ENCODE measurements at regions of chr6 and their contacts with region 1.

Region 1: DNA sequence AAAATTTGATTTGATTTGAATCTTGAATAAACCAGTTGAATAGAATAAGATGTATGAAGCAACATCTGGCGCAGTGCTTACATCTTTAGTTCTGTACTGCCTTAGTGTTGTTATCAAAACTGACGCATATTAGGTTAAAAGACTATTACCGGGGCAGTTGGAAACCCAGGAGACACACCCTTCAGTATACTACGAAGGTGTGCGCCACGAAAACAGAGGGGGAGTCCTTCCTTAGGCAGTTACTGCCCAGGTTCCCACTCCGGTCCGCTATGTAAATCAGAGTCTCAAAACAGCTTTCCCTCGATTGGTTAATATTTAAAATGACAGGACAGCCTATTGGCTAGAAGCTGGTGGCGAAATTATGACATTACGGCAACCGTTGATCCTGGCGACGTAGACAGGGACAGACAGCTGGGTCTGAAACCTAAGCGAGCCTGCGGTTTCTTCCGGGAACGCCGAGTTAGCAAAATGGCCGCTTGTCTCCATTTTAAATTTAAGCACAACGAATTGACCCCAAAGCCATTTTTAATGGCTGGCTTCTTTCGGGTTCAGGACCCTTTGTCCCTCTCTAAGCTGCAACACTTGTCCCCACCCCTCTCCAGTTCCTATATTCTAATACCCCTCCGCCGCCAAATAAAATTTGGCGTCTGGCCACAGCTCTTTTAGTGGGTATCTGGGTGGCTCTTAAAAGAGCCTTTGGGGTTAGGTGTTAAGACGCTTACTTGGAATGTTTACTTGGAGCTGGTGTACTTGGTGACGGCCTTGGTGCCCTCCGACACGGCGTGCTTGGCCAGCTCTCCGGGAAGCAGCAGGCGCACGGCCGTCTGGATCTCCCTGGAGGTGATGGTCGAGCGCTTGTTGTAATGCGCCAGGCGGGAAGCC is 35.8 kb downstream of the HFE start:
- DNase-seq: peak; percentile 95
- H3K4me3 Mint-ChIP-seq: peak overlapping the region; percentile 95
- H3K27ac Mint-ChIP-seq: peak overlapping the region; percentile 100
- H3K4me1 Mint-ChIP-seq: peaks cover 34% of the 10 kb centered on the region
- H3K27me3 Mint-ChIP-seq: peaks cover 8% of the 10 kb centered on the region

Region 2: DNA sequence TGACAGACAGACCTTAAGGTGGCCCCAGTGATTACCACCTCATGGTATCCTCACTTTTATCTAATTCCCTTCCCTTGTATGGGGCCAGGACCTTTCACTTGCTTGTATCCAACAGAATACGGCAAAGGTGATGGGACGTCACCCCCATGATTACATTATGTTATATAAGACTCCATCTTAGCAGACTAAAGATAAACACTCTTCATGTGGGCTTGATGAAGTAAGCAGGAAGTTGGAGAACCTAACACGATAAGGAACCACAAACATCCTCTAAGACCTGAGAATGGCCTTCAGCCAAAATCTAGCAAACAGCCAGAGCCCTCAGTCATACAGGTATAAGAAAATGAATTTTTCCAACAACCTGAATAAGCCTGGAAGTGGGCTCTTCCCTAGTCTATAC is 257.0 kb before region 1 on chr6:
- CTCF ChIA-PET with region 1: no interaction called
- POLR2A ChIA-PET with region 1: no interaction called
- intact Hi-C with region 1: no loop called
- DNase-seq: peak; percentile 19
- H3K4me3 Mint-ChIP-seq: no peak overlapping the region
- H3K27ac Mint-ChIP-seq: peak overlapping the region; percentile 32
- H3K4me1 Mint-ChIP-seq: peaks cover 26% of the 10 kb centered on the region
- H3K27me3 Mint-ChIP-seq: no peaks in the 10 kb centered on the region

Region 3: GRCh38 chr6:26054857-26055669 is 68.0 kb before region 1 on chr6:
- CTCF ChIA-PET with region 1: interaction called, 4 read pairs
- POLR2A ChIA-PET with region 1: interaction called, 121 read pairs
- intact Hi-C with region 1: loop called (anchors 1 kb)
- DNase-seq: peak; percentile 94
- H3K4me3 Mint-ChIP-seq: peak overlapping the region; percentile 93
- H3K27ac Mint-ChIP-seq: peak overlapping the region; percentile 98
- H3K4me1 Mint-ChIP-seq: peaks cover 22% of the 10 kb centered on the region
- H3K27me3 Mint-ChIP-seq: peaks cover 14% of the 10 kb centered on the region

Region 4: GRCh38 chr6:26156076-26156849 is 33.2 kb after region 1 on chr6:
- CTCF ChIA-PET with region 1: interaction called, 11 read pairs
- POLR2A ChIA-PET with region 1: interaction called, 863 read pairs
- intact Hi-C with region 1: loop called (anchors 1 kb)
- DNase-seq: peak; percentile 91
- H3K4me3 Mint-ChIP-seq: peak overlapping the region; percentile 81
- H3K27ac Mint-ChIP-seq: peak overlapping the region; percentile 93
- H3K4me1 Mint-ChIP-seq: peaks cover 46% of the 10 kb centered on the region
- H3K27me3 Mint-ChIP-seq: peaks cover 24% of the 10 kb centered on the region

Region 5: GRCh38 chr6:26204332-26205165 is 81.5 kb after region 1 on chr6:
- CTCF ChIA-PET with region 1: interaction called, 4 read pairs
- POLR2A ChIA-PET with region 1: interaction called, 163 read pairs
- intact Hi-C with region 1: loop called (anchors 1 kb)
- DNase-seq: peak; percentile 90
- H3K4me3 Mint-ChIP-seq: no peak overlapping the region
- H3K27ac Mint-ChIP-seq: no peak overlapping the region
- H3K4me1 Mint-ChIP-seq: peaks cover 21% of the 10 kb centered on the region
- H3K27me3 Mint-ChIP-seq: peaks cover 3% of the 10 kb centered on the region

Region 6: DNA sequence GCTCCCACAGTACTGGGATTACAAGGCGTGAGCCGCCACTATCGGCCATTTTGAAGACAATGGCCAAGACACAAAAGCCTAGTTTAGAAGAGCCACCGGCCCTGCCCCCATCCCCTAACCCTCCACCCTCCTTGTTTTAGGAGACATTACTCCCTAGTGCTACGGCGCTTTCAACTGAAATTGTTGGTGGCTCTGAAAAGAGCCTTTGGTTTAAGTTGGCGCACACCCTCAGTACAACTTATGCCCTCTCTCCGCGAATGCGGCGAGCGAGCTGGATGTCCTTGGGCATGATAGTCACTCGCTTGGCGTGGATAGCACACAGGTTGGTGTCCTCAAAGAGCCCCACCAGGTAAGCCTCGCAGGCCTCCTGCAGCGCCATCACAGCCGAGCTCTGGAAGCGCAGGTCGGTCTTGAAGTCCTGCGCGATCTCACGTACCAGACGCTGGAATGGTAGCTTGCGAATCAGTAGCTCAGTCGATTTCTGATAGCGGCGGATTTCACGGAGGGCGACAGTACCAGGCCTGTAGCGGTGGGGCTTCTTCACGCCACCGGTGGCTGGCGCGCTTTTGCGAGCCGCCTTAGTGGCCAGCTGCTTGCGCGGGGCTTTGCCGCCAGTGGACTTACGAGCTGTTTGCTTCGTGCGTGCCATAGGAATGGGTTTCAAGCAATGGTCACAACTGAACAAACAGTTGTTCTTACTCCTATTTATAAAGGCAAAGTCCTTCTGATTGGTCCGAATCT is 127.1 kb after region 1 on chr6:
- CTCF ChIA-PET with region 1: no interaction called
- POLR2A ChIA-PET with region 1: interaction called, 14 read pairs
- intact Hi-C with region 1: no loop called
- DNase-seq: peak; percentile 84
- H3K4me3 Mint-ChIP-seq: peak overlapping the region; percentile 82
- H3K27ac Mint-ChIP-seq: peak overlapping the region; percentile 99
- H3K4me1 Mint-ChIP-seq: peaks cover 22% of the 10 kb centered on the region
- H3K27me3 Mint-ChIP-seq: no peaks in the 10 kb centered on the region

Region 7: DNA sequence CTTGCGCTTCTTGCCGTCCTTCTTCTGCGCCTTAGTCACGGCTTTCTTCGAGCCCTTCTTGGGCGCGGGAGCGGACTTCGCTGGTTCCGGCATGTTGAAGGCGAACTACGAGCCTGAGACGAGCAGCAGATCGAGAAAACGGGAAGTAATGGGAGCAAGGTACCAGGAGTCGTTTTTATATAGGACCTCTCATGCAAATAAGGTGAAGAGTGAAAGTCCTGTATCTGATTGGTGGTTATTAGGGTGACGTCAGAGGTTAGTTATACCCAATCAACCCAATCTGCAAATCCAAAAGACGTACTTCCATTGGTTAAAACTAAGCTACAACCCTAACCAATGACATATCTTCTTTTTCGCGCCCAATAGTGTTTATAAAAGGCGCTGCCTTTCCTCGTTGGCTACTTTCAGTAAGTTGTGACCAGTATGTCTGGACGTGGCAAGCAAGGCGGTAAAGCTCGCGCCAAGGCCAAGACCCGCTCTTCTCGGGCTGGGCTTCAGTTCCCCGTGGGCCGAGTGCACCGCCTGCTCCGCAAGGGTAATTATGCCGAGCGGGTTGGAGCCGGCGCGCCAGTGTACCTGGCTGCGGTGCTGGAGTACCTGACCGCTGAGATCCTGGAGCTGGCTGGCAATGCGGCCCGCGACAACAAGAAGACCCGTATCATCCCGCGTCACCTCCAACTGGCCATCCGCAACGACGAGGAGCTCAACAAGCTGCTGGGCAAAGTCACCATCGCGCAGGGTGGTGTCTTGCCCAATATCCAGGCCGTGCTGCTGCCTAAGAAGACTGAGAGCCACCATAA is 1023.9 kb after region 1 on chr6:
- CTCF ChIA-PET with region 1: no interaction called
- POLR2A ChIA-PET with region 1: interaction called, 14 read pairs
- intact Hi-C with region 1: loop called (anchors 1 kb)
- DNase-seq: peak; percentile 89
- H3K4me3 Mint-ChIP-seq: no peak overlapping the region
- H3K27ac Mint-ChIP-seq: no peak overlapping the region
- H3K4me1 Mint-ChIP-seq: peaks cover 21% of the 10 kb centered on the region
- H3K27me3 Mint-ChIP-seq: no peaks in the 10 kb centered on the region